Activated CD8-positive, alpha-beta T cell treated with anti-CD3 and anti-CD28 coated beads for 36 hours (primary cell): ENCODE measurements at regions of chr19 and their contacts with region 1.

Region 1: DNA sequence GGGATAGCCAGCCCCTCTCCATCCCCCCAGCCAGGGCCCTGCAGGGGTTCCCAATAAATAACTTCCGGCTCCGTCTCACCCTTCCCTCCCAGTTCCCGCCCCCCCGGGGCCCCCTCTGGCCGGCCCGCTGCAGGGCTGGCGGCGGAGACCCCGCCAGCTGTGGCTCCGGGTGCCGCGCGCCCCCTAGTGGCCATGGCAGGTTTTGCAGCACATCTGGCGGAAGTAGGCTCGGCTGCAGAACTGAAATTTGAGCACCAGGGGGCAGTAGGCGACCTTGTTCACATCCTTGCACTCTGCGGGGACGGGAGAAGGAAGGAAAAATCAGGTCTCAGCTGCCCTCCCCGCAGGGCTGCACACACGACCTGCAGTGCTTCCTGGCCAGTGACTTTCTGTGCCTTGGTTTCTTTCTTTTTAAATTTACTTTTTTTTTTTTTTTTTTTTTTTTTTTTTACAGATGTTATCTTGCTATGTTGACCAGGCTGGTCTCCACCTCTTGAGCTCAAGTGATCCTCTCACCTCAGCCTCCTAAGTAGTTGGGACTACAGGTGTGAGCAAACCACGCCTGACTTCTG is 3.6 kb upstream of the MYO1F start:
- DNase-seq: peak; percentile 91
- ATAC-seq: peak; percentile 69
- H3K4me3 Mint-ChIP-seq: no peak overlapping the region
- H3K27ac Mint-ChIP-seq: no peak overlapping the region
- H3K4me1 Mint-ChIP-seq: peaks cover 20% of the 10 kb centered on the region
- H3K27me3 Mint-ChIP-seq: peaks cover 2% of the 10 kb centered on the region
- CTCF ChIP-seq: peak; percentile 100

Region 2: DNA sequence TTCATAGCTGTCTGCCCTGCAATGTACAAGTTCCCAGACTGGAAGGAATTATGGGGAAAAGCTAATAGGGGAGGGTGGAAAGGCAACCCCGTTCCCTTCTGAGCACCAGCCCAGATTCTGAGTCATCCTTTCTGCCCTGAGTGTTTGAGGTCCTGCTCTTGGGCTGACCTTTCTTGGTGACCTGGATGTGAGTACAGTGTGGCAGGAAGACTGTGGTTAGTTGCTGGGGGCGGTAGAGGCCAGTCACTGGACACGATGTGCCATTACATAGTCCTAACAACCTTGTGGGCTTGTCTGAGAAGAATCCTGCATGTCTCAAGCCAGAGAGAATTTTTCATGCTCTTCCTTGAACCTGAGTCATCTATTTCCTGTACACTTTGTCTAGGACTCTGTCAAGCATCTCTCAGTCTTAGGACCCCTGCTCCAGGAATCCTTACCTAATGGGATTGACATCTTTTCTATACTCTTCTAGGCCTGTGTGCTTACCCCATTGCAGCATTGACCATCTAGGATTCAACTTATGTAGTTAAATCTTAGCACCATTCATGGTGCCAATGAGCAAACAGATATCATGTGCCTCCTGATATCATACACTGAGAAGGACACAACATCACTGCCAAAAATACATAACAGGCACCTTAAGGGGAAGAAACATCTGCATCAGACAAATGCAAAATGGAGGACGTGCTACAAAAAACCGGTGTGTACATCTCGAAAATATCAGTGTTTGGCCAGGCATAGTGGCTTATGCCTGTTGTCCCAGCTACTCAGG is 225.0 kb before region 1 on chr19:
- CTCF ChIA-PET with region 1: interaction called, 37 read pairs
- POLR2A ChIA-PET with region 1: no interaction called
- intact Hi-C with region 1: no loop called
- DNase-seq: no peak
- ATAC-seq: peak; percentile 70
- H3K4me3 Mint-ChIP-seq: no peak overlapping the region
- H3K27ac Mint-ChIP-seq: no peak overlapping the region
- H3K4me1 Mint-ChIP-seq: peaks cover 10% of the 10 kb centered on the region
- H3K27me3 Mint-ChIP-seq: peaks cover 11% of the 10 kb centered on the region
- CTCF ChIP-seq: no peak

Region 3: GRCh38 chr19:8430650-8431049 is 150.1 kb before region 1 on chr19:
- CTCF ChIA-PET with region 1: no interaction called
- POLR2A ChIA-PET with region 1: no interaction called
- intact Hi-C with region 1: no loop called
- DNase-seq: no peak
- ATAC-seq: no peak
- H3K4me3 Mint-ChIP-seq: no peak overlapping the region
- H3K27ac Mint-ChIP-seq: no peak overlapping the region
- H3K4me1 Mint-ChIP-seq: peaks cover 3% of the 10 kb centered on the region
- H3K27me3 Mint-ChIP-seq: no peaks in the 10 kb centered on the region
- CTCF ChIP-seq: no peak

Region 4: DNA sequence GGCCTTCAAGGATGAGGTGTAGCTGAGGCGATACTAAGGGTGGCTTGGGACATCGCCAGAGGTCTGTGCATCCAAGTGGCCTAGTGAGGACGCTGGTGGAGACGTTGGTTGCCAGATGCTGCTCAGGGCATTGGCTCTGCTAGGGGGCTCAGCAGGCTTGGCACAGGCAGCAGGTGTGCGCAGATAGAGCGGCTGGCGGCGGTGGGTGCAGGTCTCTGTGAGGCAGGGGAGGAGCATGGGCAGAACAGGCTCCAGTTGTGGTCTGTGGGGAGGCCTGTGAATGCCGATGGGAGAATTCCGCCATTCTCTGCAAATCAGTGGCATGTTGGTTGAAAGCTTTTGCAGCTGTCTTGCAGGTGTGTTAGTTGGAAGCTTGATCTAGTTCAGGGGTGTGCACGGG is 99.6 kb before region 1 on chr19:
- CTCF ChIA-PET with region 1: interaction called, 39 read pairs
- POLR2A ChIA-PET with region 1: interaction called, 3 read pairs
- intact Hi-C with region 1: no loop called
- DNase-seq: no peak
- ATAC-seq: peak; percentile 25
- H3K4me3 Mint-ChIP-seq: no peak overlapping the region
- H3K27ac Mint-ChIP-seq: peak overlapping the region; percentile 72
- H3K4me1 Mint-ChIP-seq: peaks cover 68% of the 10 kb centered on the region
- H3K27me3 Mint-ChIP-seq: no peaks in the 10 kb centered on the region
- CTCF ChIP-seq: no peak

Region 5: GRCh38 chr19:8513687-8514504 is 66.9 kb before region 1 on chr19 and contains the start of gene ZNF414:
- CTCF ChIA-PET with region 1: interaction called, 117 read pairs
- POLR2A ChIA-PET with region 1: interaction called, 24 read pairs
- intact Hi-C with region 1: loop called (anchors 5 kb)
- DNase-seq: peak; percentile 98
- ATAC-seq: peak; percentile 83
- H3K4me3 Mint-ChIP-seq: peak within 1 kb of the TSS; percentile 88
- H3K27ac Mint-ChIP-seq: peak within 1 kb of the TSS; percentile 99
- H3K4me1 Mint-ChIP-seq: peaks cover 41% of the 10 kb centered on the region
- H3K27me3 Mint-ChIP-seq: no peaks in the 10 kb centered on the region
- CTCF ChIP-seq: no peak
- total RNA-seq, gene ZNF414: 21.6 to 24.0 TPM

Region 6: GRCh38 chr19:8592231-8593009 is 11.6 kb after region 1 on chr19:
- CTCF ChIA-PET with region 1: interaction called, 97 read pairs
- POLR2A ChIA-PET with region 1: interaction called, 4 read pairs
- intact Hi-C with region 1: no loop called
- DNase-seq: peak; percentile 98
- ATAC-seq: peak; percentile 93
- H3K4me3 Mint-ChIP-seq: peak overlapping the region; percentile 70
- H3K27ac Mint-ChIP-seq: peak overlapping the region; percentile 2
- H3K4me1 Mint-ChIP-seq: peaks cover 19% of the 10 kb centered on the region
- H3K27me3 Mint-ChIP-seq: no peaks in the 10 kb centered on the region
- CTCF ChIP-seq: no peak

Region 7: GRCh38 chr19:8641908-8642547 is 61.2 kb after region 1 on chr19:
- CTCF ChIA-PET with region 1: interaction called, 62 read pairs
- POLR2A ChIA-PET with region 1: interaction called, 3 read pairs
- intact Hi-C with region 1: no loop called
- DNase-seq: peak; percentile 21
- ATAC-seq: no peak
- H3K4me3 Mint-ChIP-seq: no peak overlapping the region
- H3K27ac Mint-ChIP-seq: no peak overlapping the region
- H3K4me1 Mint-ChIP-seq: peaks cover 5% of the 10 kb centered on the region
- H3K27me3 Mint-ChIP-seq: peaks cover 5% of the 10 kb centered on the region
- CTCF ChIP-seq: peak; percentile 63

Region 8: DNA sequence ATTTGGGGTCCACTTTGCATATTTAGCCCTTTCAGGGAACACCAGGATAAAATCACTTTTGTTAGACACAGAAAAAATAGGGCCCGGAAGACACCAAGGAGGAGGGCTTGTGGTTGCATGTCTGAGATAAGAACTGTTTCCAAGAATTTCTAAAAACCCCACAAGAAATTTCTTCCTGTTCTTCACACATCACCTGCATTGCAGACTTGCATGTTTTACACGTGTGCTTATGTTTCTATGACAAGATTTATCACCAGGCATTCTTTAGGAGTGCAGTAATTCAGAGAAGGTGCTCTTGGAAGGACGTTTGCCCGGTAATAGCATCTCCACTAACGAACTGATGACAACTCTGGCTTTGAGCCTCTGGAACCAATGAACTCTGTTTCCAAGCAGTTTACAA is 124.9 kb after region 1 on chr19:
- CTCF ChIA-PET with region 1: no interaction called
- POLR2A ChIA-PET with region 1: no interaction called
- intact Hi-C with region 1: no loop called
- DNase-seq: no peak
- ATAC-seq: peak; percentile 25
- H3K4me3 Mint-ChIP-seq: no peak overlapping the region
- H3K27ac Mint-ChIP-seq: peak overlapping the region; percentile 83
- H3K4me1 Mint-ChIP-seq: peaks cover 44% of the 10 kb centered on the region
- H3K27me3 Mint-ChIP-seq: peaks cover 2% of the 10 kb centered on the region
- CTCF ChIP-seq: no peak